Left ventricle myocardium superior (tissue), 1 donor: ENCODE measurements at regions of chr18 and their contacts with region 1.

Region 1: DNA sequence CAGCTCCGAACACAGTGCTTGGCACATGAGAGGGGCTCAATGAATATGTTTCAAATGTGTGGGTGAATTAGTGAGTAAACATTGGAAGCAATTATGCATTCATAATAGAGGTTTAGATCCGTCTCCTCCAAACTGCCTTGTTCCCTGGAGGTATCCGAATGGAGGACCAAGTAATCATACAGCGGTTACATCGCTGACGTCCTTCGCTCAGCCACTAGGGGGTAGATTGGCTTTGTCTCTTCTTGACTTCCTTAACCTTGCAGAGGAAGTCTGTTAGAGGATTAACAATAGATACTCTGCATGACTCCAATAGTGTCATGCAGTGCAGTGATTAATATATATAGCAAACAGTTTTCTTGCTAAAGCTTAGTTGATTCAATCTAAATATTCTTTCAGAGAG is 517.0 kb downstream of the PTPRM start:
- DNase-seq: peak; percentile 34
- ATAC-seq: peak; percentile 75

Region 2: GRCh38 chr18:8151181-8151580 is 67.0 kb after region 1 on chr18:
- intact Hi-C with region 1: no loop called
- DNase-seq: no peak
- ATAC-seq: no peak

Region 3: GRCh38 chr18:8389391-8390340 is 305.5 kb after region 1 on chr18:
- intact Hi-C with region 1: loop called (anchors 10 kb)
- DNase-seq: peak; percentile 72
- ATAC-seq: peak; percentile 83